Activated T-helper 1 cell treated with anti-CD3 and anti-CD28 coated beads, Interleukin-12 subunit alpha, Interleukin-12 subunit beta, Interleukin-2, Interleukin-4 antibody, amounts not matched to agents 30 ng/mL and 10 ng/mL and 1 ng/mL, durations not matched to agents 14 hours and 24 hours and 36 hours (primary cell): ENCODE measurements at regions of chr9 and their contacts with region 1.

Region 1: GRCh38 chr9:114953917-114954316 is 23.5 kb upstream of the TNFSF8 start:
- DNase-seq: no peak
- H3K4me3 Mint-ChIP-seq: no peak overlapping the region
- H3K27ac Mint-ChIP-seq: peak overlapping the region; percentile 35
- H3K4me1 Mint-ChIP-seq: peaks cover 53% of the 10 kb centered on the region
- H3K27me3 Mint-ChIP-seq: no peaks in the 10 kb centered on the region

Region 2: GRCh38 chr9:113221003-113221799 is 1732.7 kb before region 1 on chr9 and contains the starts of genes FKBP15 and SLC31A1:
- intact Hi-C with region 1: loop called (anchors 10 kb)
- DNase-seq: peak; percentile 96
- H3K4me3 Mint-ChIP-seq: peak within 1 kb of the TSS; percentile 98
- H3K27ac Mint-ChIP-seq: peak within 1 kb of the TSS; percentile 97
- H3K4me1 Mint-ChIP-seq: peaks cover 64% of the 10 kb centered on the region
- H3K27me3 Mint-ChIP-seq: no peaks in the 10 kb centered on the region
- total RNA-seq, gene FKBP15: 34.9 and 35.8 TPM in 2 replicates
- total RNA-seq, gene SLC31A1: 16.1 and 17.6 TPM in 2 replicates

Region 3: DNA sequence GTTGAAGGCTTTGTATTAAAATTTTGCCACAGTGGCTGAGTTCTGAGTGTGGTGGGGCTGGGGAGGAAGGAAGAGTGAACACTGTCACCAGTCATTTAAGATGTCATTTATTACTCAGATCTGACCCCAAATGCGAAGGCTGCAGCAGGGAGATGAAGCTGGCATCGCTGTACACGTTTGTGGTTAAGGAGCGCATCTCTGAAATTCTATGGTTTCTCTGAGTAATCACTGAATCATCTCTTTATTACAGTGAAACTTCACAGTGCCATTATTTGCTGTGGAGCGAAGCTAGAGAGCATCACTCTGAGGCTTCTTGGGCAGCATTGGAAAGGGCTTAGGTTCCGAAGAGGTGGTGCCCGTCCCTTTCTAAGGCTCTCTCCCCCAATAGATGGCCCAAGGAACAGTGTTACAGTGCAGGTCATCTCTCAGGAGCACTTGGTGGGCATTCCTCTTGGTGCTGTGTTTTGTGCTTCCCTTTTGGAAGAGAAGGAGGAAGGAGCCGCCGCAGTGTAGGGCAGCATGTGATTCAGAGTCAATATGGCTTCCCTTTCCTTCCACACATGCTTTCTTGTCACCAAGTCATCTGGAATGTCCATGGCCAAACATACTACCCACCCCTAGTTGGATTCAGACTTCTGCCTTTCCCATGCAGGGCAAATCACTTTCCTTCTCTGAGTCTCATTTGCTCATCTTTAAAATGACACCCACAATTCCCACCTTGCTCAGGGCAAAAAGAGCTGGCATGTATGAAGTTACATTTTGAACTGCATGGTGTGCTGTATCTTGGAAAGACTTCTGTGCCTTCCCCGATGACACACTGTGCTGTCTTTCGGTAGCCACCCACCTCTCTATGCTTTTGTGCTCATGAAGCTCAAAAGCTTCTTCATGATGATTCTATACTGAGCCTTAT is 262.6 kb before region 1 on chr9:
- intact Hi-C with region 1: loop called (anchors 1 kb)
- DNase-seq: peak; percentile 80
- H3K4me3 Mint-ChIP-seq: peak overlapping the region; percentile 69
- H3K27ac Mint-ChIP-seq: peak overlapping the region; percentile 98
- H3K4me1 Mint-ChIP-seq: peaks cover 93% of the 10 kb centered on the region
- H3K27me3 Mint-ChIP-seq: no peaks in the 10 kb centered on the region

Region 4: GRCh38 chr9:114738581-114739316 is 215.2 kb before region 1 on chr9:
- intact Hi-C with region 1: loop called (anchors 1 kb)
- DNase-seq: peak; percentile 70
- H3K4me3 Mint-ChIP-seq: no peak overlapping the region
- H3K27ac Mint-ChIP-seq: peak overlapping the region; percentile 81
- H3K4me1 Mint-ChIP-seq: peaks cover 73% of the 10 kb centered on the region
- H3K27me3 Mint-ChIP-seq: no peaks in the 10 kb centered on the region

Region 5: DNA sequence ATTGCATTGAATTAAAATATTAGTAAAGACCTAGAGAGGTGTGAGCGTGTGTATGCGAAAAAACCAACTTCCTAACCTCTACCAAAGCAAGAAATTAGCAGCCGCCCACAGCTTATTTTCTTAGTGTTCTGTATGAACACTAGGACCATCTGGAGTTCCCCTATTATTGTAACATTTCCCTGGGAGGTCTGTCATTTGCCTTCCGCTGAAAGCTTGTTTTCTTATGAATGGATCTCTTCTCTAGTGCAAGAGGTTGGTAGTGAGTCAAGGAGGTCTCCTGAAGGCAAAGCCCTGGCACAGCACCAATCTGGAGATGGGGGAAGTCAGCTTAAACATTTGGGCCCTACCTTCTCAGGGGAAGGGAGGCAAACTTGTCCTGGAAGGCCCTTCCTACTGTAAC is 34.3 kb before region 1 on chr9:
- intact Hi-C with region 1: loop called (anchors 5 kb)
- DNase-seq: no peak
- H3K4me3 Mint-ChIP-seq: peak overlapping the region; percentile 63
- H3K27ac Mint-ChIP-seq: peak overlapping the region; percentile 64
- H3K4me1 Mint-ChIP-seq: peaks cover 94% of the 10 kb centered on the region
- H3K27me3 Mint-ChIP-seq: no peaks in the 10 kb centered on the region

Region 6: GRCh38 chr9:114988962-114989599 is 35.2 kb after region 1 on chr9:
- intact Hi-C with region 1: loop called (anchors 1 kb)
- DNase-seq: peak; percentile 47
- H3K4me3 Mint-ChIP-seq: peak overlapping the region; percentile 37
- H3K27ac Mint-ChIP-seq: peak overlapping the region; percentile 95
- H3K4me1 Mint-ChIP-seq: peaks cover 87% of the 10 kb centered on the region
- H3K27me3 Mint-ChIP-seq: no peaks in the 10 kb centered on the region

Region 7: GRCh38 chr9:115035841-115036612 is 82.1 kb after region 1 on chr9:
- intact Hi-C with region 1: loop called (anchors 1 kb)
- DNase-seq: no peak
- H3K4me3 Mint-ChIP-seq: peak overlapping the region; percentile 31
- H3K27ac Mint-ChIP-seq: peak overlapping the region; percentile 84
- H3K4me1 Mint-ChIP-seq: peaks cover 40% of the 10 kb centered on the region
- H3K27me3 Mint-ChIP-seq: peaks cover 5% of the 10 kb centered on the region